ENCODE measurements at regions of chr4 and their contacts with region 1.

Region 1: GRCh38 chr4:84582302-84583000 is 476 bp upstream of the CDS1 start:
- DNase-seq: peak; percentile 96
- H3K4me3 Mint-ChIP-seq: peak overlapping the region; percentile 81
- H3K27ac Mint-ChIP-seq: no peak overlapping the region
- H3K4me1 Mint-ChIP-seq: peaks cover 12% of the 10 kb centered on the region
- H3K27me3 Mint-ChIP-seq: peaks cover 53% of the 10 kb centered on the region

Region 2: GRCh38 chr4:84482564-84483563 is 99.6 kb before region 1 on chr4:
- intact Hi-C with region 1: loop called (anchors 5 kb)
- DNase-seq: no peak
- H3K4me3 Mint-ChIP-seq: no peak overlapping the region
- H3K27ac Mint-ChIP-seq: no peak overlapping the region
- H3K4me1 Mint-ChIP-seq: peaks cover 2% of the 10 kb centered on the region
- H3K27me3 Mint-ChIP-seq: peaks cover 79% of the 10 kb centered on the region

Region 3: DNA sequence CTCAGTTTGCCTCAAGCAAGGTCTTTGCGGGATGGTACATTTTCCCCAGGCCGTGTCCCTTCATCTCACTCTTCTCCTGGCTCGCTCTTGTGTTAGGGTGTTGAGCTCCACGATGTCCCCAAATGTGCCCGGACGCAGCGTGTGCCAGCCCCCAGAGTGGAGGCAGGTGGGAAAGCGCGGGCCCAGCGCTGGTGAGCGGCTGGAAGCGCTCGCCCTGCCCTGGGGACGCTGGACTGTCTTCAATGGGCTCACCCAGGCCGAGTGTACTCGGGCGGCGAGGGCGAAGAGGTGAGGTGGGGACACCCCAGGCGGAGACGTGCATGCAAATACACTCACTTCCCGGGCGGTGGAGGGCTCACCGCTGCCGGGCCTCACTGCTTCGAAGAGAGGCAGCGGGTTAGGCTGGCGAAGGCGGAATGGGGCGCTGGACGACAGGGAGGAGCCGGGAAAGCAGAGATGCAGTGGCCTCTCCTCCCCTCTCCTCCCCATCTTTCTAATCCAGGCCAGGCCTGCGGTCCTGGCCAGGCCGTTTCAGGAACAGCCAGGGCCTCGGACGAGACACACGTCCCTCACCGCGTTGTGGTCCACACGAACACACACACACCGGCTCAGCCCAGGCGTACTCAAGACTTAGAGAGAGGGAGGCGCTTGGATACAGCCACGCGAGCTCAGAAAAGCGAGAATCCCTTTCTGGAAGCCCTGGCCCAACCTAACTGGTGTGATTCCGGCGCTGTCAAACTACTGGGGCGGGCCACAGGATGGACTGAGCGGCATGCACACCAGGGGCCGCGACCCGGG is 85.5 kb before region 1 on chr4:
- intact Hi-C with region 1: loop called (anchors 1 kb)
- DNase-seq: no peak
- H3K4me3 Mint-ChIP-seq: no peak overlapping the region
- H3K27ac Mint-ChIP-seq: peak overlapping the region; percentile 48
- H3K4me1 Mint-ChIP-seq: peaks cover 9% of the 10 kb centered on the region
- H3K27me3 Mint-ChIP-seq: peaks cover 83% of the 10 kb centered on the region

Region 4: GRCh38 chr4:84966383-84967242 is 384.2 kb after region 1 on chr4 and contains the start of gene WDFY3:
- intact Hi-C with region 1: loop called (anchors 5 kb)
- DNase-seq: peak; percentile 58
- H3K4me3 Mint-ChIP-seq: peak within 1 kb of the TSS; percentile 83
- H3K27ac Mint-ChIP-seq: peak within 1 kb of the TSS; percentile 16
- H3K4me1 Mint-ChIP-seq: peaks cover 7% of the 10 kb centered on the region
- H3K27me3 Mint-ChIP-seq: peaks cover 31% of the 10 kb centered on the region
- total RNA-seq, gene WDFY3: 0.59 and 0.75 TPM in 2 replicates